Posterior cingulate gyrus (tissue), 11 donors: ENCODE measurements at regions of chr16 and their contacts with region 1.

Region 1: DNA sequence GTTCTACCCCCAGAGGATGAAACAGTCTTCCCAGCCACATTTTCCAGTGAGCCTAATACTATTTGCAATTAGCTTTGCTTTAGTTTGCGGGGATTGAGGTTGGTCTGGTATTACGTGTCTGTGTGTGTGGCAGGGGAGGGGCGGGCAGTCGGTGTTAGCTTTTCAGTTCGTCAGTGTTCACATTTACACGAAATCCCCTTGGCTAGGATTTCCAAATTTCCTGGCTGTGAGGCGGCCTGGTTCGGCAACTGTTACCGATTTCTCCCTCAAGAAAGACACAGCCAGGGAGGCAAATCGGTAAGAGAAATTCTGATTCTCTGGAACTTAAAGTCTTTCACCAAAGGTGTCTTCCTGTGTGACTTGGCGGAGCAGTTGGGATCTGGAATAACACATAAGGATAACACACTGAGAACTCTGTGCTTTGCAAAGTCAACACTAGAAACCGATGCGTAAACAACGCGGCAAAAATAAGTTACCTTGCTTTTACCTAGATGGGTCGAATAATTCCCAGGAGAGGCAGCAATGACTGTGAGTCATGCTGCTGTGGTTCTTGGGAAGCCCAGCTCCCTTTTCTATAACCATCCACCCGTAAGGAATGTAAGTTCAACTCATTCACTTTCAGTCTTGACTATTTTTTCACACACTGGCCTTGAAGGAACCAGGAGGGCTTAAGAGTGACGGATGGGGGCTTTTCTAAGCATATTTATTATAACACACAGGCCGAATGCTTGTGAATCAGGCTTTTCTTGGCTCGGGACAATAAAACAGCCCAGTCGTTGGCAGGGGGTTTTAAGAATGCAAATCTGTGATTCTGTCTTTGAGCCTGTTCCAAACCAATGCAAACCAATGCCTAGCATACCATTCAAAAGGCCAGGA is 24.2 kb downstream of the GPRC5B start:
- DNase-seq: peak in 1 of 10 donors; percentile 68

Region 2: GRCh38 chr16:19765860-19766553 is 94.4 kb before region 1 on chr16:
- intact Hi-C with region 1: loop called (anchors 2 kb)
- DNase-seq: peak; percentile 65 to 95 (median 78)

Region 3: GRCh38 chr16:19822533-19822932 is 37.9 kb before region 1 on chr16:
- intact Hi-C with region 1: no loop called
- DNase-seq: no peak